Vagina (tissue), 2 donors: ENCODE measurements at regions of chr11 and their contacts with region 1.

Region 1: DNA sequence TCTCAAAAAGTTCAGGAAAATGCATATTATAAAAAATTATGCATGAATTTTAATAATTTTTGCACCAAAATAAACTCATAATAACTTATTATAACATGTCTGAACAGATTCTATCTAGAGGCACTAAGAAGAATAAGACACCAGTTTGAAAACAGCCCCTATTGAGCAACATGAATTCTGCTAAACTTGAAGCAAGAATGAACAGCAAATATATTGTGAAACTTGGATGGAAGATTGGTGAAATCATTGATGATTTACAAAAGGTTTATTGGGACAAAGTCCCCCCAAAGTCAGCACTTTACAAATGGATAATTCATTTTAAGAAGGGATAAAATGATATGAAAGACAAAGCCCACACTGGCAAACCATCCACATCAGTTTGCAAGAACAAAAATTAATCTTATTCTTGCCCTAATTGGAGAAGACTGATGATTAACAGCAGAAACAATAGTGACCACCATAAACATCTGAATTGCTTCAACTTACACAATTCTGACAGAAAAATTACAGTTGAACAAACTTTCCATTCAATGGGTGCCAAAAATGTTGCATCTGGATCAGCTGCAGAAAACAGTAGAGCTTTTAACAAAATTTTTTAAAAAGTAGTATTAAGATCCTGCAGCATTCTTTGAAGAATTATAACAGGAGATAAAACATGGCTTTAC is 257.5 kb upstream of the FAT3 start:
- DNase-seq: no peak
- H3K4me3 ChIP-seq: no peak overlapping the region
- H3K27ac ChIP-seq: no peak overlapping the region
- H3K4me1 ChIP-seq: no peaks in the 10 kb centered on the region
- H3K27me3 ChIP-seq: no peaks in the 10 kb centered on the region
- CTCF ChIP-seq: no peak
- POLR2A ChIP-seq: no peak

Region 2: DNA sequence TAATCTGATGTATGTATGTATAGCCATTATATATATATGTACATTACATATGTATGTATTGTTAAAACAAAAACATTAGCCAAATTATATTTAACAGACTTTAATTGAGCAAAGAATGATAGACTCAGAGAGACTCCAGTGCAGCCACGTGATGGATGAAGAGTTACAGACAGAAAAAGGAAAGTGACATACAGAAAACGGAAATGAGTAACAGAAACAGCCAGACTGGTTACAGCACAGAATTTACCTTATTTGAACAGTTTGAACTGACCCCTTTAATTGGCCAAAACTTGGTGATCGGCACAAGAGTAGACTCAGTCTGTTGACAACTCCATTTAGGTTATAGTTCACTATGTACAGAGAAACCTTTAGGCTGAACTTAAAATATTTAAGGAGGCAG is 1779.3 kb before region 1 on chr11:
- intact Hi-C with region 1: loop called (anchors 5 kb)
- DNase-seq: no peak
- H3K4me3 ChIP-seq: no peak overlapping the region
- H3K27ac ChIP-seq: no peak overlapping the region
- H3K4me1 ChIP-seq: no peaks in the 10 kb centered on the region
- H3K27me3 ChIP-seq: no peaks in the 10 kb centered on the region
- CTCF ChIP-seq: no peak
- POLR2A ChIP-seq: no peak

Region 3: GRCh38 chr11:92083123-92083522 is 116.0 kb after region 1 on chr11:
- intact Hi-C with region 1: no loop called
- DNase-seq: no peak
- H3K4me3 ChIP-seq: no peak overlapping the region
- H3K27ac ChIP-seq: no peak overlapping the region
- H3K4me1 ChIP-seq: no peaks in the 10 kb centered on the region
- H3K27me3 ChIP-seq: no peaks in the 10 kb centered on the region
- CTCF ChIP-seq: no peak
- POLR2A ChIP-seq: no peak